Psoas muscle (tissue), 8 donors: ENCODE measurements at regions of chr1 and their contacts with region 1.

Region 1: DNA sequence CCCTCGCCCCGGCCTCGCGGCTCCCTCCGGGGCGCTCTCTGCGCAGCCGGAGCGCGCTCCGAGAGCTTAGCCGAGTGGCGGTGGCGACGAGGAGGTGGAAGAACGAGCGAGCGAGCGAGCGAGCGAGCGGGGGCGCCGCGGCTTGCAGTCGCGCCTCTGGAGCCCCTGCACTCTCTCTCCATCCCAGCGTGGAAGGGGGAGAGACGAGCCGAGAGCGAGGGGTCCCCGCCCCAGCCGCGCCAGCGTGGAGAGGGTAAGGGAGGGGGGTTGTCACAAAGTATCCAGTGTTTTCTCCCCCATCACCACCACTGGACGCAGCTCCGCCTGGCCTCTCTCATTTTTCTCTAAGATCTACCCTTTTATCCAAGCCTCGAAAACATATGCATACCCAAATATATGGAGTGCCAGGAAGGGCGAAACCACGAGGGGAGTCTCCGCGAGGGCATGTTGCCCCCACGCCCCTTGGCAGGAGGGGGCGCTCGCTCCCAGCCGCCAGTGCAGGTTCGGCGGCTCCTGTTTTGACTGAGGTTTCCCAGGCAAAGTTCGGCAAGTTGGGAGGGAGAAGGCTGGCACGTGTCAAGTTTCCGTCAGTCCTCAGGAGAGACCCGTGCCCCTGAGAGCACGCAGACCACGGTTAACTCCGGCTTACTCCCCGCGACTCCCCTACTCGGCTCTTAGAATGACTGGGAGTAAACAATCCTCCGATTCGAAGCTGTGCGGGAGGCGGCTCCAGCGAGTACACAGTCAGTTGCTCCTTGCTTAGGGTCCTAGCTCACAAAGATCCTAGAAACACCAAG is 569 bp upstream of the DAB1 start:
- DNase-seq: peak in 1 of 2 donors; percentile 53
- ATAC-seq: peak; percentile 67 to 88 (median 76)
- H3K4me3 ChIP-seq: peak overlapping the region; percentile 61
- H3K27ac ChIP-seq: no peak overlapping the region
- H3K4me1 ChIP-seq: no peaks in the 10 kb centered on the region
- H3K27me3 ChIP-seq: peaks cover 0 to 60% (median 9%) of the 10 kb centered on the region in 3 donors
- CTCF ChIP-seq: peak; percentile 59

Region 2: DNA sequence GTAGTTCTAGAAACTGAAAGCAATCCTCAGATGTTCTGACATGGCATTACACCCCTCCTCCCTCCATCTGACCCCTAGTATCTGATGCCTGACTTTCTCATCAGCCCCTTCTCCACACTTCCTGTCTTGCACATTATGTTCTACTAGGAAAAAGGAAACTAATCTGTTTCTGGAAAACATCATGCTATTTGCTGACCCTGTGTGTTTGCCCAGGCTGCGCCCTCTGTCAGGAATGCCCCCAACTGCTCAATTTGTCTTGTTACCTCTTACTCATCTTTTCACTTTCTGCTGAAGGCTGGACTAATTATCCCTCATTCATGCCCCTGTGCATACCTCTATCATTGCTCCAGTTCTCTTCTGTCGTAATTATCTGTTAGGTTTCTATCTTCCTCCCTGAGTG is 37.0 kb after region 1 on chr1:
- intact Hi-C with region 1: no loop called
- DNase-seq: no peak
- ATAC-seq: no peak
- H3K4me3 ChIP-seq: no peak overlapping the region
- H3K27ac ChIP-seq: no peak overlapping the region
- H3K4me1 ChIP-seq: no peaks in the 10 kb centered on the region
- H3K27me3 ChIP-seq: no peaks in the 10 kb centered on the region
- CTCF ChIP-seq: no peak

Region 3: DNA sequence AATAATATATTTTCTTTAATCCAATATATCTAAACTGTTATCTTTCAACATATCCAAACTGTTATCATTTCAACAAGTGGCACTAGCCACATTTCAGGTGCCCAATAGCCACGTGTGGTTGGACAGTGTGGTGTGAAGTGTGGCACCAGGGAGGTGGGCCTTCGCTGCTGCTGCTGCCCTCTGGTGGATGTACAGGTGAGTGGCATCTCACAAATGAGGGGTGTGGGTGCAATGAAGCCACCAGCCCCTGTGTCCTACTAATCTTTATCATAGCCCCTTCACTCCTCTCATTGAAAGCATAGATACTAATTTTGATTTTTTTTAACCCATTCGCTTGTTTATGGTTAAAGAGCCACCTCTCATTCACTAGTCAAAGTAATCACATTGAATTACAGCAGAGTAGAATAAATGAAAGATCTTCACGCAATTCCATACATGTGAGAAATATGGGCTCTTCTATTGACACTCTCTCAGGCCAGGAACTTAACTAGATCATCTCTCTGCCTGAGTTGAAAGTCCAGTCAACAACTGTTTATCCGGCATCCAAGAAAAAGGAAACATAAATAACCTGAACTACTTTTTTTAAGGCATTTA is 622.9 kb after region 1 on chr1:
- intact Hi-C with region 1: loop called (anchors 5 to 10 kb)
- DNase-seq: no peak
- ATAC-seq: peak in 2 of 4 donors; percentile 62 to 67
- H3K4me3 ChIP-seq: no peak overlapping the region
- H3K27ac ChIP-seq: no peak overlapping the region
- H3K4me1 ChIP-seq: no peaks in the 10 kb centered on the region
- H3K27me3 ChIP-seq: no peaks in the 10 kb centered on the region
- CTCF ChIP-seq: peak; percentile 69

Region 4: DNA sequence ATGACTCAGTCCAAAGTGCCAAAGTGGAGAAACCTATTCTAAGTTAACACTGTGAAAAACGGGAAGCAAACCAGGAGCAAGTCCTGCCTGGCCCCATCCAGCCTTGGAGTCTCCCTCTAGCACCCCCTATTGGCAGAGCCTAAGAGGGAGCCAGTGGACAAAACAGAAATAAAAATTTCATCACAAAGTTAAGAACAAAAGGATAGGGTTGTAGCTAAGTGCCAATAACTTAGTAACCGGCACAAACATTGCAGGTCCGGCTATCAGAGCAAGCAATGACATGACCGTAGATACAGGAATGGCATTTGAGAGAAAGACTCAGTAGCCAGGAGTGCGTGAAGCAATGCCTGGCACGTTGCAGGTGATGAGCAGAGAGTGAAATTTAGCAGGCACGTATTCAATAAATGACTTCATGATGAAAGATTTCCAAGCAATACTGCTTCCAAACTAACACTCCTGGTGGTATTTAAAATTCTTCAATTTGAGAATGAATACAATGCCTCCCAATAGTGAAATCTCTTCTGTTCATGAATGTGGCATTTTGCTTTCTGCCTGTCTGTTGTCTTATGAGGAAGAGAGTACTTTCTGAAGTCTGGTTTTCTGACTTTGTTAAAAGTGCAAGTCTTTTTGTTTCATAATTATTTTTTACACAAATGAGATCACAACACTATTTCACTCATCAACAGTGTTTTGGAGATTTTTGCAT is 731.1 kb after region 1 on chr1:
- intact Hi-C with region 1: loop called in 1 of 2 experiments (anchors 10 kb)
- DNase-seq: no peak
- ATAC-seq: peak in 3 of 4 donors; percentile 48 to 75 (median 65)
- H3K4me3 ChIP-seq: no peak overlapping the region
- H3K27ac ChIP-seq: no peak overlapping the region
- H3K4me1 ChIP-seq: no peaks in the 10 kb centered on the region
- H3K27me3 ChIP-seq: peaks cover 0 to 4% (median 1%) of the 10 kb centered on the region in 3 donors
- CTCF ChIP-seq: peak; percentile 32